ENCODE measurements at regions of chr1 and their contacts with region 1.

Region 1: GRCh38 chr1:54199765-54200518 is at the starts of genes CYB5RL and MRPL37:
- DNase-seq: peak; percentile 89
- H3K4me3 ChIP-seq: peak within 1 kb of the TSS; percentile 85
- H3K27ac ChIP-seq: peak within 1 kb of the TSS; percentile 71
- H3K4me1 ChIP-seq: no peaks in the 10 kb centered on the region
- H3K27me3 ChIP-seq: no peaks in the 10 kb centered on the region
- CTCF ChIP-seq: no peak
- total RNA-seq, gene CYB5RL: 7.0 and 8.4 TPM in 2 replicates
- total RNA-seq, gene MRPL37: 84.6 and 90.3 TPM in 2 replicates

Region 2: DNA sequence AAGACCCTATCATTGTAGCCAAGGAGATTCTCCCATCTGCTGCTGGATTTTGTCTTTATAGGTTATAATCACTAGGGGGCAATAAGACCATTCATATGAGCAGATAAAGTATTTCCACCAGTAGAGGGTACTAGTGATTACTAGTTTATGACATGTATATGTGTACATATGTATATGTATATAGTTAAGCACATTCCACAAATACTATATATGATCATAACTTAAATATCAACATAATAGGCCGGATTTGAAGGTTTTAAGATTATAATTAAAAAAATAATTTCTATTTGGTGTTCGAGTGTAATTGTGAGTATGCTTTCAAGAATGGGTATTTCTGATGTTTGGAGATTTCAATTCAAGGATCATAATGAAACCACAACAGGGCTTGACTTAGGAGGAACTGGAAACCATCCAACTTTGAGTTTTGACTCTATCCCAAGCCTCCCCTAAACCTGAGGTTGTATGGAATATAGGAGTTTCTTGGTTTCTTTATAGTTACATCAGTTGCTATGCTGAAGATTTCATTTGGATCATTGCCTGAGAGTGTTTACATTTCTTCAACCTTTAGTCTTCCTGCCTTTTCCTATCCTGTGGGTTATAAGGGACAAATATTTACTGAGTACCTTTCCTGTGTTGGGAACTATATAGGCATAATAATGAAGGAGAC is 129.6 kb before region 1 on chr1:
- CTCF ChIA-PET with region 1: no interaction called
- POLR2A ChIA-PET with region 1: no interaction called
- intact Hi-C with region 1: loop called (anchors 10 kb)
- DNase-seq: peak; percentile 54
- H3K4me3 ChIP-seq: no peak overlapping the region
- H3K27ac ChIP-seq: no peak overlapping the region
- H3K4me1 ChIP-seq: no peaks in the 10 kb centered on the region
- H3K27me3 ChIP-seq: no peaks in the 10 kb centered on the region
- CTCF ChIP-seq: peak; percentile 75

Region 3: DNA sequence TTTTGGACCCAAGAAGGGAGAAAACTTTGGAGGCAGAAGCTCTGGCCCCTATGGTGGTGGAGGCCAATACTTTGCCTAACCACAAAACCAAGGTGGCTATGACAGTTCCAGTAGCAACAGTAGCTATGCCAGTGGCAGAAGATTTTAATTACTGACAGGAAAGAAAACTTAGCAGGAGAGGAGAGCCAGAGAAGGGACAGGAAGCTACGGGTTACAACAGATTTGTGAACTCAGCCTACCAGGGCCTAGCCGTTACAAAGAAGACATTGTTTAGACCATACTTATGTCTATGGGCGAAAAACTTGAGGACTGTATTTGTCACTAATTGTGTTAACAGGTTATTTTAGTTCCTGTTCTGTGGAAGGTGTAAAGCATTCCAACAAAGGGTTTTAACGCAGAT is 337.7 kb after region 1 on chr1:
- CTCF ChIA-PET with region 1: no interaction called
- POLR2A ChIA-PET with region 1: no interaction called
- intact Hi-C with region 1: no loop called
- DNase-seq: peak; percentile 29
- H3K4me3 ChIP-seq: no peak overlapping the region
- H3K27ac ChIP-seq: no peak overlapping the region
- H3K4me1 ChIP-seq: peaks cover 15% of the 10 kb centered on the region
- H3K27me3 ChIP-seq: no peaks in the 10 kb centered on the region
- CTCF ChIP-seq: no peak

Measured in A673 (cell line).